GM10248 (cell line): ENCODE measurements at regions of chr1 and their contacts with region 1.

Region 1: DNA sequence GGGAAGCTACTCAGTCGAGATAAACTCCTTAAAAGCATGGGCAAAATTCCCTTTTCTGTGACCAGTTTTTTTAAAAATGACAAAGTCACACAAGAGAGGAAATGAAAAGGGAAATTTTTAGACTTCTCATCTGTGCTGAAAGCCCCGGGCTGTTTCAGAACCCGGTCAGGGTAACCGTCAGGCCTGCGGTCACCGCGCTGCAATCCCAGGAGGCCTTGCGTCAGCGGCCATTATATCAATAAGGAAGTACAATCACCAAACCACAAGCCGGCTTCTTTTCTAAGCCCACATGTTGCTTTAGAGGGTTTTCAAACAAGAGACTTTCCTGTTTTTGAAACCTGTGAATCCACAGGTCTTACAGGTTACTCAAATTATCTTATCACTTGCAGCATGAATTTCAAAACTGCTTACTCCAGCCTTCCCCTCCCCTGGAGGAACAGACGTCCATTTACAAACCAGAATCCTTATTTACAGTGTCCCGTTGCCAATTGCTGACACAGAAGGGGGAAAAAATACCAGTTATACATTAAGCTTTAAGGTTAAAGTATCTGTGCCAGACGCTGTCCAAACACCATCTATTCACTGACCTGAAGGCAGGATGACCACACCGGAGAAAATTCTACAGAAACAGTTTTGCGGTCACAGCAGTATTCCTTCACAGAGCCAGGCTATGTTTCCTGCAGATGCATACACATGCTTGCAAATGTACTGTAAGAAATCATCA is 165.3 kb downstream of the TOMM20 start:
- DNase-seq: peak; percentile 87
- CTCF ChIP-seq: no peak

Region 2: DNA sequence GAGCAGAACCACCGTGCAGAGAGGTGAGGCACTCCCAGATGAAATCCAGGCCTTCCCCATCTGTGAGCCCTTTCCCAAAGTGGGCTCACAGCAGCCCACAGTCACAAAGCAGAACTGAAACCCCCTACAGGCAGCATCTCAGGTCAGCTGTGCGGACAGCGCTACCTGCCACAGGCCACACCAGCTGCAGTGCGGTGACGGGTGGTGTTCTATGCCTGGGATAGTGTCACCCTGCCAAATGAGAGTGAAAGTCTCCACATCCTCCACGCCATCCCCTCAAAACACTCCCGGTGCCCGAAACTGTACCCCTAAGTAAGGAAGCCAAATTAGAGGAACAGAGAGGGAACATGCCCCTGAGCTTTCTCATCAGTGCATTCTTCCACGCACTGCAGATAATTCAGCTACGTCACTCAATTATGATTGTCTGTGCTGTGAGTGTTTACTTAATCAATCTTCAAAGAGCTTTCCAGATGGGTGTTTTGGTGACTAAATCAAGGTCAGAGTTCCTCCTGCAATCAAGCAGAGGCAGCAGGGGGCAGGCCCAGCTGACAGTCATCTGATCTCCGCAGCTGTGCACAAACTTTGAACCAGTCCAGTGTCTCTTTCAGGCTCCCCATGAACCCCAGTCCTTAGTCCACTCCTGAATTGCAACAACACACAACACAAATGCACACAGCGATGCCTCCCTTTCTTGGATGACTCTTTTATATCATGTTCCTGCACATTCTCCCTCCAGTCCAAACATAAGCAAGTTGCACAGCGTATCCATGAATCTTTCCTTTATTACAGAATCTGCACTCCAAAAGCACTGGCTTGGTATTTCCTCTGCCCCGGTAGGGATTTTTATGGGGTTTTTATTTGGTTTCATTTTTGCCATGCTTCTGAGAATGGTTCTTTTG is 15.3 kb after region 1 on chr1:
- CTCF ChIA-PET with region 1: interaction called, 19 read pairs
- POLR2A ChIA-PET with region 1: interaction called, 9 read pairs
- DNase-seq: peak; percentile 64
- CTCF ChIP-seq: no peak